CD4-positive, alpha-beta T cell (primary cell): ENCODE measurements at regions of chr16 and their contacts with region 1.

Region 1: GRCh38 chr16:30922960-30923535 is 324 bp upstream of the FBXL19 start:
- DNase-seq: peak; percentile 87 to 99 (median 93)
- ATAC-seq: peak; percentile 66
- H3K4me3 ChIP-seq: peak overlapping the region; percentile 93
- H3K4me3 Mint-ChIP-seq: peak overlapping the region; percentile 99
- H3K27ac ChIP-seq: peak overlapping the region; percentile 85 to 98
- H3K27ac Mint-ChIP-seq: peak overlapping the region; percentile 92
- H3K4me1 ChIP-seq: peaks cover 27% of the 10 kb centered on the region
- H3K4me1 Mint-ChIP-seq: peaks cover 19% of the 10 kb centered on the region
- H3K27me3 ChIP-seq: no peaks in the 10 kb centered on the region
- H3K27me3 Mint-ChIP-seq: no peaks in the 10 kb centered on the region
- CTCF ChIP-seq: no peak

Region 2: DNA sequence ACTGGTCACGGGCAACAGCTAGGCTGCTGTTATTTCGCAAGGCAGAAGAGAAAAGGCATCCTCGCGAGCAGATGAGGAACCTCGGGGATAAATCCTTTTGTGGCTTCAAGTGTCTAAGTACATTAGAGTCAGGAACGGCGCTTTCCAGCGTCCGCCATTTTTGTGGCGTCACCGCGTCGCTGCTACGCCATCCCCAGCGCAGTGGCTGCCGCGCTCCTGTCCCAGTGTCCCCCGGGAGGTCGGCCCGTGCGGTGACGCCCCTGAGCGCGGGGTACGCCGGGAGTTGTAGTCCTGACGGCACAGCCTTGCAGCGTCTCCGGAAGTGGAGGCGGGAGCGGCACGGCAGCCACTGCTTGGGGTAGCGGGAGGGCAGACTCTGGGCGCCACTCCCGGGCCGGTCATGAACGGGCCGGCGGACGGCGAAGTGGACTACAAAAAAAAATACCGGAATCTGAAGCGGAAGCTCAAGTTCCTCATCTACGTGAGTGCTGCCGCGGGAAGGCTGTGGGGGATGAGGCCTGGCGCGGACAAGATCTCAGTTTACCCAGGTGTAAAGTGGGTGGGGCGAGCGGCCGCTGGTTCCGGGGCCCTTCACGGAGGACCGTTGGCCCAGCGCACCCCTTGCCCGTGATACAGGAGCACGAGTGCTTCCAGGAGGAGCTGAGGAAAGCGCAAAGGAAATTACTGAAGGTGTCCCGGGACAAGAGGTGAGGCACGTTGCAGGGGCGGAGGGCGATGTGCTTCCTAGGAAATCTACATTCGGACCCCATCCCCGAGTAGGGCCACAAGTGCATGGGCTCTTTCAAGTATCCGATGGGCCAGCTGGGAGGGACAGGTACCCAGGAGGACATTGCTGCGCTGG is 926.9 kb before region 1 on chr16 and contains the start of gene INO80E:
- CTCF ChIA-PET with region 1: no interaction called
- POLR2A ChIA-PET with region 1: no interaction called
- intact Hi-C with region 1: loop called in 1 of 2 experiments (anchors 10 kb)
- DNase-seq: peak; percentile 97 to 100 (median 99)
- ATAC-seq: peak; percentile 95
- H3K4me3 ChIP-seq: peak within 1 kb of the TSS; percentile 83
- H3K4me3 Mint-ChIP-seq: peak within 1 kb of the TSS; percentile 98
- H3K27ac ChIP-seq: peak within 1 kb of the TSS; percentile 98
- H3K27ac Mint-ChIP-seq: peak within 1 kb of the TSS; percentile 99
- H3K4me1 ChIP-seq: peaks cover 30% of the 10 kb centered on the region
- H3K4me1 Mint-ChIP-seq: peaks cover 33% of the 10 kb centered on the region
- H3K27me3 ChIP-seq: no peaks in the 10 kb centered on the region
- H3K27me3 Mint-ChIP-seq: no peaks in the 10 kb centered on the region
- CTCF ChIP-seq: no peak
- total RNA-seq, gene INO80E: 54.6 to 57.6 TPM

Region 3: GRCh38 chr16:30657866-30658730 is 264.9 kb before region 1 on chr16 and contains the start of gene FBRS:
- CTCF ChIA-PET with region 1: no interaction called
- POLR2A ChIA-PET with region 1: interaction called, 4 read pairs
- intact Hi-C with region 1: loop called in 1 of 2 experiments (anchors 1 kb)
- DNase-seq: peak; percentile 99 to 100 (median 100)
- ATAC-seq: peak; percentile 74
- H3K4me3 ChIP-seq: peak within 1 kb of the TSS; percentile 93
- H3K4me3 Mint-ChIP-seq: peak within 1 kb of the TSS; percentile 94
- H3K27ac ChIP-seq: peak within 1 kb of the TSS; percentile 99
- H3K27ac Mint-ChIP-seq: peak within 1 kb of the TSS; percentile 99
- H3K4me1 ChIP-seq: peaks cover 51% of the 10 kb centered on the region
- H3K4me1 Mint-ChIP-seq: peaks cover 44% of the 10 kb centered on the region
- H3K27me3 ChIP-seq: no peaks in the 10 kb centered on the region
- H3K27me3 Mint-ChIP-seq: no peaks in the 10 kb centered on the region
- CTCF ChIP-seq: peak; percentile 78
- total RNA-seq, gene FBRS: 162 to 163 TPM

Region 4: GRCh38 chr16:30761928-30762810 is 160.9 kb before region 1 on chr16 and contains the starts of genes CFAP119 and RNF40:
- CTCF ChIA-PET with region 1: no interaction called
- POLR2A ChIA-PET with region 1: no interaction called
- intact Hi-C with region 1: loop called in 1 of 2 experiments (anchors 2 kb)
- DNase-seq: peak; percentile 70 to 96 (median 85)
- ATAC-seq: peak; percentile 91
- H3K4me3 ChIP-seq: peak within 1 kb of the TSS; percentile 99
- H3K4me3 Mint-ChIP-seq: peak within 1 kb of the TSS; percentile 99
- H3K27ac ChIP-seq: peak within 1 kb of the TSS; percentile 71 to 90
- H3K27ac Mint-ChIP-seq: peak within 1 kb of the TSS; percentile 85
- H3K4me1 ChIP-seq: peaks cover 35% of the 10 kb centered on the region
- H3K4me1 Mint-ChIP-seq: peaks cover 30% of the 10 kb centered on the region
- H3K27me3 ChIP-seq: no peaks in the 10 kb centered on the region
- H3K27me3 Mint-ChIP-seq: no peaks in the 10 kb centered on the region
- CTCF ChIP-seq: no peak
- total RNA-seq, gene CFAP119: 1.7 to 2.2 TPM
- total RNA-seq, gene RNF40: 63.0 to 65.2 TPM

Region 5: DNA sequence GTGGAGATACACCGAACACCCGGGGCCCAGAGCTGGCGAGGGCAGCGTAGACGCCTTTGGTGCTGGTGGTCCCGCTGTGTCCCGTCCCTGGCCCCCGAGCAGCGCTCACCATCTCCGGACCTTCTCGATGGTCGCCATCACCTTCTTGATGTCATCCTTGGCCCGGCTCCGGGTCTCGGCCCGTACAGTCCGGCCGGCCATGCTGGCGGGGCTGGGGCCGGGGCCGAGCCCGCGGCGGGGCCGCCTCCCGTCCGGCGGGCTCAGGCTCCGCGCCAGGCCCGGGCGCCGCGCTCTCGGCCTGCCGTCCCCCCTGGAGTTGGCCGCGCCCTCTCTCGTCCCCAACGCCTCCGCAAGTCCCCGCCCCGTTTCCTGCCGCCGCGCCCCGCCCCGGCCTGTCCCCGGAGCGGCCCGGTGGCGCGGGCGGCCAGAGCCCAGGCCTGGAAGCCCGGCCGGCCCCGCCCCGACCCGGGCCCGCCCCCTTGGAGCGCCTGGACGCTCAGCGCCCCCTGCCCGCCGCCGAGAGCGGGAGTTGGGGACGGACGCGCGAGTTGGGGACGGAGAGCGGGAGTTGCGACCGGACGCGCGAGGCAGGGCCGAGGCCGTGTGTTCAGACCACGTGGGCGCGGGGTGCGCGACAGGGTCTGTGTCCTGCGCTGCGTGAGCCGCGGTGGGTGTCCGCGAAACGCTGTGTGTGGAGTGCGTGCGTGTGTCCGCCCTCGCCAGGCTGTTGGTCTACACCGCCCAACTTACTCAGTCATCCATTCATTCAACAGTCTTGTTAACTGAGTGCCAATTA is 29.1 kb before region 1 on chr16 and contains the start of gene BCL7C:
- CTCF ChIA-PET with region 1: no interaction called
- POLR2A ChIA-PET with region 1: no interaction called
- intact Hi-C with region 1: loop called (anchors 1 to 2 kb)
- DNase-seq: peak; percentile 51 to 89 (median 74)
- ATAC-seq: peak; percentile 72
- H3K4me3 ChIP-seq: peak within 1 kb of the TSS; percentile 88
- H3K4me3 Mint-ChIP-seq: peak within 1 kb of the TSS; percentile 88
- H3K27ac ChIP-seq: peak within 1 kb of the TSS; percentile 73 to 85
- H3K27ac Mint-ChIP-seq: peak within 1 kb of the TSS; percentile 72
- H3K4me1 ChIP-seq: peaks cover 45% of the 10 kb centered on the region
- H3K4me1 Mint-ChIP-seq: peaks cover 49% of the 10 kb centered on the region
- H3K27me3 ChIP-seq: no peaks in the 10 kb centered on the region
- H3K27me3 Mint-ChIP-seq: no peaks in the 10 kb centered on the region
- CTCF ChIP-seq: no peak
- total RNA-seq, gene BCL7C: 17.8 to 19.1 TPM

Region 6: DNA sequence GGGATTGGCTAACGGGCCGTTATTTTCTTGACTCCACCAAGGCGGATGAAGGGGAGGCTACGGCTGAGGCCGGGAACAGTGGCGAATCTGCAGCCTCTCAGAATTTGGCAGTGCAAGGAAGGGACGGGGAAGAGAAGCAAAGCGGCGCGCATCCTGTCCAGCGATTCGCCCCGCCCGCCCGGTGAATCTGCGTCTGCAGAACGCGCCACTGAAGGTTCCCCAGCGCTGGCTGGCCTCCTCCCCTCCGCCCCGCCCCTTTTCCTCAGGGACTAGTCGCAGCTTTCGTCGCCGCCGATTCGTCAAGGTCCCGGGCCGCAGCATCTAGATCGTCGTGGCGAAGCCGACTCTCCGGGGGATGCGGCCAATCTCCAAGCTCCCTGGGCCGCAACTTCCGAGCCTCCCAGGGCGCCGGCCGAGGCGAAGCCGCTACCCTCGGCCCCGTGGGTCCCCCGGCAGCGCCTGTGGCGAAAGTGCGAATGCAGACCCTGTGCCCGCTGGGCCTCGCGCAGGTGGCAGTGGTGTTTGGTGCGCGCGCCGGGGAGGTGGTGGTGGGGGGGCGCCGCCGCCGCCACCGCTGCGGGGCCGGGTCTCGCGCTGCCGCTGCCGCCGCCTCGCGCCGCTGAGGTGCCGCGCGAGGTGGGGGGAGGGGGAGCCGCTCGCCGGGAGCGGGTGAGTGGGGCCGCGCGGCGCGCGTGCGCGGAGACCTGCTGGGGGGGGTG is 34.6 kb after region 1 on chr16 and contains the start of gene SETD1A:
- CTCF ChIA-PET with region 1: no interaction called
- POLR2A ChIA-PET with region 1: no interaction called
- intact Hi-C with region 1: loop called (anchors 1 kb)
- DNase-seq: peak; percentile 94 to 99 (median 97)
- ATAC-seq: peak; percentile 86
- H3K4me3 ChIP-seq: peak within 1 kb of the TSS; percentile 82
- H3K4me3 Mint-ChIP-seq: peak within 1 kb of the TSS; percentile 97
- H3K27ac ChIP-seq: peak within 1 kb of the TSS; percentile 95
- H3K27ac Mint-ChIP-seq: peak within 1 kb of the TSS; percentile 97
- H3K4me1 ChIP-seq: peaks cover 37% of the 10 kb centered on the region
- H3K4me1 Mint-ChIP-seq: peaks cover 39% of the 10 kb centered on the region
- H3K27me3 ChIP-seq: no peaks in the 10 kb centered on the region
- H3K27me3 Mint-ChIP-seq: no peaks in the 10 kb centered on the region
- CTCF ChIP-seq: no peak
- total RNA-seq, gene SETD1A: 40.1 to 41.2 TPM

Region 7: DNA sequence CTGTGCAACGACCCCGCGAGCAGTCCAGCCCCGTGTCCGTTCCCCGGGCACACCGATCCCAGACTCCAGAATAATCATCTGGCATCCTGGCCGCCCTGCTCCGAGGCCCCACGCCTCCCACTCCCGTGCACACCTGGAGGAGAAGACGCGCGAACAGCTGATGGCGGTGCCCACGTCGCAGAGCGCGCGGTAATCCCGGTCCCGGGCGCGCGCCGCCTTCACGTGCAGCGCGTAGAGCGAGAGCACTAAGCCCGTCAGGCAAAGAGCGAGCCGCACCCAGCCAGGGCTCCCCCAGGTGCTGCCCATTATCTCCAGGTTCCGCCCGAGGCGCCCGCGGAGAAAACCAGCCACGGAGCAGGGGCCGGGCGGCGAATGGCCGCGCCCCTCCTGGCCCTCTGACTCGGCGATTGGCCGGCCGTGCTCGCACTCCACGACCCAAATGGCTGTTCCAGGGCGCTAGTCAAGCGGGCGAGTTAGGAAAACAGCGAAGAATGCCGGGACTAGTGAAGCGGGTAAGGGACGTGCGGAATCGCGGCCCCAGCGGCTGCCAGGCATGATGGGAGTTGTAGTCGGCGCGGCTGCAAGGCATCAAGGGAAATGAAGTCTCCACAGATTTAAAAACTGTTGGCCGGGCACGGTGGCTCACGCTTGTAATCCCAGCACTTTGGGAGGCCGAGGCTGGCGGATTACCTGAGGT is 171.5 kb after region 1 on chr16 and contains the start of gene VKORC1:
- CTCF ChIA-PET with region 1: no interaction called
- POLR2A ChIA-PET with region 1: no interaction called
- intact Hi-C with region 1: loop called in 1 of 2 experiments (anchors 1 kb)
- DNase-seq: peak; percentile 75 to 95 (median 82)
- ATAC-seq: peak; percentile 90
- H3K4me3 ChIP-seq: peak within 1 kb of the TSS; percentile 82
- H3K4me3 Mint-ChIP-seq: peak within 1 kb of the TSS; percentile 93
- H3K27ac ChIP-seq: peak within 1 kb of the TSS; percentile 84
- H3K27ac Mint-ChIP-seq: peak within 1 kb of the TSS; percentile 83
- H3K4me1 ChIP-seq: peaks cover 31% of the 10 kb centered on the region
- H3K4me1 Mint-ChIP-seq: peaks cover 34% of the 10 kb centered on the region
- H3K27me3 ChIP-seq: no peaks in the 10 kb centered on the region
- H3K27me3 Mint-ChIP-seq: no peaks in the 10 kb centered on the region
- CTCF ChIP-seq: no peak
- total RNA-seq, gene VKORC1: 19.0 to 19.2 TPM